Activated CD4-positive, alpha-beta memory T cell treated with anti-CD3 and anti-CD28 coated beads for 36 hours (primary cell): ENCODE measurements at regions of chr4 and their contacts with region 1.

Region 1: GRCh38 chr4:81405894-81406401 is 65.8 kb downstream of the RASGEF1B start:
- DNase-seq: peak; percentile 13
- H3K4me3 Mint-ChIP-seq: peak overlapping the region; percentile 4
- H3K27ac Mint-ChIP-seq: no peak overlapping the region
- H3K4me1 Mint-ChIP-seq: peaks cover 5% of the 10 kb centered on the region
- H3K27me3 Mint-ChIP-seq: no peaks in the 10 kb centered on the region

Region 2: GRCh38 chr4:81392164-81392563 is 13.8 kb before region 1 on chr4:
- CTCF ChIA-PET with region 1: no interaction called
- POLR2A ChIA-PET with region 1: no interaction called
- intact Hi-C with region 1: no loop called
- DNase-seq: no peak
- H3K4me3 Mint-ChIP-seq: no peak overlapping the region
- H3K27ac Mint-ChIP-seq: no peak overlapping the region
- H3K4me1 Mint-ChIP-seq: peaks cover 2% of the 10 kb centered on the region
- H3K27me3 Mint-ChIP-seq: peaks cover 2% of the 10 kb centered on the region

Region 3: DNA sequence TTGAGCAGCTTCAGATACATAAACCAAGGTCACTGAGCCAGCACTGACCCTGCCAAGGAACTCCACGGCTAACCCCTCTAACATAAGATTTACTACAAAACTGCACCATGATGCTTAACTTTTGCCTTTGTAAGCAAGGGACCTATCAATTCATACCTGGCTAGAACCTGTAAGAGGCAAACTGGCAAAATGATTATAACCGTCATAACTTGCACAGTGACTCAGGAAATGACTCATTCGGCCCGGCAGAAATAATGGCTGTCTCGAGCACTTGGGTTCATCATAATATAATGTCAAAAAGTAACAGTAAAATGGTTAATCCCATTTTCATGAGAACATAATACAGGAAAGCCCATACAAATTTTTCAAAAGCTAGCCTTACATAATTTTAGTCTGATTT is 48.6 kb after region 1 on chr4:
- CTCF ChIA-PET with region 1: interaction called, 4 read pairs
- POLR2A ChIA-PET with region 1: no interaction called
- intact Hi-C with region 1: loop called (anchors 5 kb)
- DNase-seq: peak; percentile 72
- H3K4me3 Mint-ChIP-seq: no peak overlapping the region
- H3K27ac Mint-ChIP-seq: peak overlapping the region; percentile 21
- H3K4me1 Mint-ChIP-seq: peaks cover 11% of the 10 kb centered on the region
- H3K27me3 Mint-ChIP-seq: no peaks in the 10 kb centered on the region

Region 4: GRCh38 chr4:81919238-81919637 is 513.3 kb after region 1 on chr4:
- CTCF ChIA-PET with region 1: no interaction called
- POLR2A ChIA-PET with region 1: no interaction called
- intact Hi-C with region 1: loop called (anchors 5 kb)
- DNase-seq: no peak
- H3K4me3 Mint-ChIP-seq: no peak overlapping the region
- H3K27ac Mint-ChIP-seq: no peak overlapping the region
- H3K4me1 Mint-ChIP-seq: peaks cover 2% of the 10 kb centered on the region
- H3K27me3 Mint-ChIP-seq: peaks cover 6% of the 10 kb centered on the region

Region 5: DNA sequence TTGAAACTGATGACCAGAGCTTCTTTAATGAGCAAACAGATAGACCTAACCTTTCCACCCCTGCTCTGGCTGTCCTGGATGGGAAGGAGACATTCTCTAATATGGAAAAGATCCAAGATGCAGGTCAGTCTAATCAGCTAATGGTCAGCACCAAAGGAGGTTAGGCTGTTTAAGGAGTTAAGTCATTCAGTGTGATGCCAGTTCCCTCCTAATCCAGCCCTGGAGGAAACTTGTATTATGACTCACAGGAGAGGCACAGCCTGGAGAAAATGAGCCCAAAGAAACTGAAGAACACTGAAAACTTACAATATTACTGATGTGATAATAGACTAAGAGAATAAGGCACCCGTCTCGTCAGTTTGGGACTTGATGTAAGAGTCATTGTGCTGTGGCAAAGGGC is 644.9 kb after region 1 on chr4:
- CTCF ChIA-PET with region 1: no interaction called
- POLR2A ChIA-PET with region 1: no interaction called
- intact Hi-C with region 1: no loop called
- DNase-seq: no peak
- H3K4me3 Mint-ChIP-seq: no peak overlapping the region
- H3K27ac Mint-ChIP-seq: no peak overlapping the region
- H3K4me1 Mint-ChIP-seq: no peaks in the 10 kb centered on the region
- H3K27me3 Mint-ChIP-seq: peaks cover 15% of the 10 kb centered on the region

Region 6: GRCh38 chr4:82201805-82202641 is 796.1 kb after region 1 on chr4:
- CTCF ChIA-PET with region 1: interaction called, 10 read pairs
- POLR2A ChIA-PET with region 1: no interaction called
- intact Hi-C with region 1: no loop called
- DNase-seq: peak; percentile 54
- H3K4me3 Mint-ChIP-seq: no peak overlapping the region
- H3K27ac Mint-ChIP-seq: no peak overlapping the region
- H3K4me1 Mint-ChIP-seq: no peaks in the 10 kb centered on the region
- H3K27me3 Mint-ChIP-seq: no peaks in the 10 kb centered on the region

Region 7: DNA sequence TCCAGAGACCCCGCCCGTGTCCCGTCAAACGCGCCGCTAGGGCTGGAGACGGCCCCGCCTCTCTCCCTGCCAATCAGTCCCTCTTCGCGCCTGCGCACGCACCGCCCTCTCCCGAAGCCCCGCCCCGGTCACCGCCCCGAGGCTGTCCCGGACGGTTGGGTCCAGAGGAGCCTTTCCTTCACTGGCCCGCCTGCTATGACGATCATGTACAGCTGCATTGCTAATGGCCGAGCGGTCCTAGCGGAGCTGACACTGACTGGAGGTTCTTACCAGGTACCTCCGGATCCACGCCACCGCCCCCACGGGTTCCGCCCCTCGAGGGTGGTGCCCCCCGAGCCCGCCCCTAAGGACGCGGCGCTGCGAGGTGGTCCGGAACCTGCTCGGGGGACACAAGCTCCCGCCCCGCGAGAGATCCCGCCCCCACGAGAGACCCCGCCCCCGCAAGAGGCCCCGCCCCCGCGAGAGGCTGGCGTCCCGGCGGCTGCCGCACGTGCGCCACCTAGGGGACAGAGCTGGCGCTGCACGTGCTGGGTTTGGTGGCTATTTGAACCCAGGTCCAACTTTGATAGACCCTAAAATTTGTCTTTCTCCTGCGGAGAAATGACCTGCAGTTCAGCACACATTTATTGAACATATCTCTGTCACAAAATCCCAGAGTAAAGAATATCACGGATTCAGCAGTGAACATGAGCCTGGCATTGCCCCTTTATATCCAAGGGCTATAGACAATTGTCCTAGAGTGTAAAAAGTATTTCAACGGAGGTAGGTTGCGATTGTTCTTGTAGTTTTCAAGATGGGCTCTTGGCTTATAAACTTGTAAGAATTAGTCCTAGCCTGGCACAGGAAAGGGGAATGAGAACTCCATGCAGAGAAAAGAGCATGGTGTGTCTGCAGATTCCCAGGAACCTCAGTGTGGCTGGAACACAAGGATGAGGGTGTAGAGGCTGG is 879.2 kb after region 1 on chr4:
- CTCF ChIA-PET with region 1: no interaction called
- POLR2A ChIA-PET with region 1: no interaction called
- intact Hi-C with region 1: loop called (anchors 5 kb)
- DNase-seq: peak; percentile 100
- H3K4me3 Mint-ChIP-seq: peak overlapping the region; percentile 61
- H3K27ac Mint-ChIP-seq: peak overlapping the region; percentile 38
- H3K4me1 Mint-ChIP-seq: peaks cover 12% of the 10 kb centered on the region
- H3K27me3 Mint-ChIP-seq: peaks cover 3% of the 10 kb centered on the region